Heart left ventricle (tissue), 16 donors: ENCODE measurements at regions of chr2 and their contacts with region 1.

Region 1: GRCh38 chr2:200829258-200829655 is 17.5 kb downstream of the BZW1 start:
- DNase-seq: no peak
- ATAC-seq: no peak
- H3K4me3 ChIP-seq: no peak overlapping the region
- H3K27ac ChIP-seq: no peak overlapping the region
- H3K4me1 ChIP-seq: peaks cover 0 to 10% (median 1%) of the 10 kb centered on the region in 12 donors
- H3K27me3 ChIP-seq: no peaks in the 10 kb centered on the region
- CTCF ChIP-seq: no peak
- POLR2A ChIP-seq: no peak

Region 2: DNA sequence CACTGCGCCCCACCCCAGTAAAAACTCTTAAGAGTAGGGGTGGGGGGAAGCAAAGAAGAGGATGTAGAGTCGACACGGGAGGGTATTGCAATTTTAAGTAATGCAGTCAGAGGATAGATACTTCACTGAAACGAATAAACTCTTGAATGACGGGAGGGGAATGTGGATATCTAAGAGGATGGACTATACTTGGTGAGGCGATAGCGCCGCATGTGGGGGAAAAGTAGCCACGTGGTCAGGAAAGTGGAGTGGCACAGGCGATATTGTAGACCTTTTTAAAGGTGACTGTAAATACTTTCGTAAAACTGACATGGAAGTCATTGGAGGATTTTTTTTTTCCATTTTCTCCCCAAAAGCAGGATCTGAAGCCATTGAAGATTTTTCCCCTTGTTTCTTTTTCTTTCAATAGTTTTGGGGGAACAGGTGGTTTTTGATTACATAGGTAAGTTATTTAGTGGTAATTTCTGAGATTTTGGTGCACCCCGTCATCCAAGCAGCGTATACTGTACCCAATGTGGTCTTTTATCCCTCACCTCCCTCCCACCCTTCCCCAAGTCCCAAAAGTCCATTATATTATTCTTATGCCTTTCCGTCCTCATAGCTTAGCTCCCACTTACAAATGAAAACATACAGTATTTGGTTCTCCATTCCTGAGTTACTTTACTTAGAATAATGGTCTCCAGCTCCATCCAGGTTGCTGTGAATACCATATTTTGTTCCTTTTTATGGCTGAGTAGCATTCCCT is 21.4 kb after region 1 on chr2:
- intact Hi-C with region 1: loop called in 1 of 10 experiments (anchors 2 kb)
- DNase-seq: no peak
- ATAC-seq: peak; percentile 35 to 55 (median 40)
- H3K4me3 ChIP-seq: no peak overlapping the region
- H3K27ac ChIP-seq: no peak overlapping the region
- H3K4me1 ChIP-seq: peaks cover 0 to 3% (median 0%) of the 10 kb centered on the region in 12 donors
- H3K27me3 ChIP-seq: no peaks in the 10 kb centered on the region
- CTCF ChIP-seq: no peak
- POLR2A ChIP-seq: no peak